ENCODE measurements at regions of chr3 and their contacts with region 1.

Region 1: GRCh38 chr3:107429320-107430181 is 52.3 kb downstream of the CCDC54 start:
- DNase-seq: peak; percentile 59
- ATAC-seq: peak; percentile 56
- H3K4me3 Mint-ChIP-seq: peak overlapping the region; percentile 89
- H3K27ac Mint-ChIP-seq: peak overlapping the region; percentile 77
- H3K4me1 Mint-ChIP-seq: peaks cover 58% of the 10 kb centered on the region
- H3K27me3 Mint-ChIP-seq: no peaks in the 10 kb centered on the region
- CTCF ChIP-seq: peak; percentile 83

Region 2: GRCh38 chr3:107412376-107412775 is 17.2 kb before region 1 on chr3:
- CTCF ChIA-PET with region 1: interaction called, 15 read pairs
- POLR2A ChIA-PET with region 1: interaction called, 8 read pairs
- intact Hi-C with region 1: no loop called
- DNase-seq: no peak
- ATAC-seq: no peak
- H3K4me3 Mint-ChIP-seq: no peak overlapping the region
- H3K27ac Mint-ChIP-seq: no peak overlapping the region
- H3K4me1 Mint-ChIP-seq: peaks cover 5% of the 10 kb centered on the region
- H3K27me3 Mint-ChIP-seq: no peaks in the 10 kb centered on the region
- CTCF ChIP-seq: no peak

Region 3: DNA sequence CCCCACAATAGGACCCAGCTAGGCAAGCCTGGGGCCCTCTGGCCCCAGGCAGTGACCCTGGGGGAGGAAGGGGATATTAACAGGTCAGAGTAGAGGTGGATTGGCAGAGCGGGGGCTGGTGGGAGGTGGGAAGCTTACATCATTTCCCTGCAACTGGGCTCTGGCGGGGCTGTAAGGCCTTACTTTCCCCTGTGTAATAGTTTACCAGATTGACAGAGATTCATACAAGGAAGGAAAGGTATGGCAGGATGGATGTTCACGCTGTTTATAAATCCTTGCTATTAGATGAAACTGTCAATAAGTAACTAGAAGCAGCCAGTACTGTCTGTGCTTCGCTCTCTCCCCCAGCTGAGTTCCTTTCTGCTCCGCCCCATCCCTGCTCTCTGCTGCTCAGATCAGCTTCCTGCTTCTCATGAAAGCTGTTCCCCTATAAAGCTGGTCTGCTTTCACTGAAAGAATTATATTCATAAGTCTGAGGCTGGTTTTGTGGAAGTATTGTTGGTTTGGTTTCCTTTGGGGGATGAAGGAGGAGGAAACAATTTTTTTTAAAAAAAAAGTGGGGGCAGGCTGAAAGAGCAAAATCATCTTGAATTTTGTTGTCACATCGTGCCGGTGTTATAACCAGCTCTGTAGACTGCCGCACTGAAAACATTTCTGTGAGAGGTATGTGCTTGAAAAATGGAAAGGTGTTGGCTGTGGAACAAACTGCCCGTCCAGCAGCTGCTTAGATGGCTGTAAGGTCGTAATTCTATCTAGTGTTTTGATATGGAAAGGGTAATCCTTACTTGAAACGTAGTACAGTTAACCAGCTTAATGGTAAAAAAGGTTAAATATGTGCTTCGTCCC is 169.6 kb after region 1 on chr3:
- CTCF ChIA-PET with region 1: no interaction called
- POLR2A ChIA-PET with region 1: no interaction called
- intact Hi-C with region 1: loop called (anchors 5 kb)
- DNase-seq: peak; percentile 18
- ATAC-seq: peak; percentile 92
- H3K4me3 Mint-ChIP-seq: peak overlapping the region; percentile 82
- H3K27ac Mint-ChIP-seq: peak overlapping the region; percentile 93
- H3K4me1 Mint-ChIP-seq: peaks cover 64% of the 10 kb centered on the region
- H3K27me3 Mint-ChIP-seq: no peaks in the 10 kb centered on the region
- CTCF ChIP-seq: no peak

Region 4: GRCh38 chr3:107740992-107741896 is 311.7 kb after region 1 on chr3:
- CTCF ChIA-PET with region 1: no interaction called
- POLR2A ChIA-PET with region 1: interaction called, 3 read pairs
- intact Hi-C with region 1: loop called (anchors 5 kb)
- DNase-seq: no peak
- ATAC-seq: no peak
- H3K4me3 Mint-ChIP-seq: no peak overlapping the region
- H3K27ac Mint-ChIP-seq: no peak overlapping the region
- H3K4me1 Mint-ChIP-seq: peaks cover 31% of the 10 kb centered on the region
- H3K27me3 Mint-ChIP-seq: no peaks in the 10 kb centered on the region
- CTCF ChIP-seq: no peak

Measured in activated B cell treated with CpG ODN at 0.5 μM for 24 hours (primary cell).